Mammary epithelial cell (primary cell): ENCODE measurements at regions of chr3 and their contacts with region 1.

Region 1: DNA sequence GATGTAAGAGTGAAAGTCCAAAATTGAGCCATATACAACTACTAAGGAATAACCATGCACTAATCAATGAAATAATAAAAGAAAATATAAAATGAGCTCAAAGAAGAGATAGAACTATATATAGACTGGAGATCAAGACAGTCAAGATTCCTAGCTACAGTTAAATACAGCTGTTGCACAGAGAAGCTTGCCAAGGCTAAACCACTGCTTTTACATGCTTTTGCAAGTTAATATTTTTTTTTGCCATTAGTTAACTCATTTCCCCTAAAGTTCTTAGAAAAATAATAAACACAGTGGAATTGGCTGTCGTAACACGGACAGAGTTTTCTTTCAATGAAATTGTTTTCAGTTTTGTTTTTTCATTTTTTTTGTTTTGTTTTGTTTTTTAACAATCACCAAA is 123.0 kb downstream of the VGLL3 start:
- DNase-seq: no peak
- H3K4me3 ChIP-seq: no peak overlapping the region
- H3K27ac ChIP-seq: no peak overlapping the region
- H3K4me1 ChIP-seq: no peaks in the 10 kb centered on the region
- H3K27me3 ChIP-seq: peaks cover 2% of the 10 kb centered on the region
- CTCF ChIP-seq: no peak

Region 2: DNA sequence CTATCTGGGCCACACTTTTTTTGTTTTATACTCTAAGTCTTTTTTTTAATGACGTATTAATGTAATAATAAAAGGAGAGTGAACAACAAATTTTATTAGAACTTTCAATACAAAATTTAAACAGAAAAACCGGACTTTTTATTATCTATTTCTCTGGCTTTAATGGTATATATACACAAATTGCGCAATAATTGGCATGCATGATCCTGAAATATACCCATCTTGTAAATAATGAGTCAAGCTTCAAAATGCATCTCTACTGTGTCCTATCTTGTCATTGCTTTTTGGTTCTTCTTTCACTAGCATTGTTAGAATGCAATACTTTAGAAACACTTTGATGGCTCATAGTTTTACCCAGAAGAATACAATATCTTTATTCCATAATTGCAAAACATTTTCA is 945.6 kb before region 1 on chr3:
- CTCF ChIA-PET with region 1: no interaction called
- dilution Hi-C with region 1: no loop called
- in situ Hi-C with region 1: no loop called
- intact Hi-C with region 1: no loop called
- DNase-seq: no peak
- H3K4me3 ChIP-seq: no peak overlapping the region
- H3K27ac ChIP-seq: no peak overlapping the region
- H3K4me1 ChIP-seq: no peaks in the 10 kb centered on the region
- H3K27me3 ChIP-seq: no peaks in the 10 kb centered on the region
- CTCF ChIP-seq: no peak

Region 3: DNA sequence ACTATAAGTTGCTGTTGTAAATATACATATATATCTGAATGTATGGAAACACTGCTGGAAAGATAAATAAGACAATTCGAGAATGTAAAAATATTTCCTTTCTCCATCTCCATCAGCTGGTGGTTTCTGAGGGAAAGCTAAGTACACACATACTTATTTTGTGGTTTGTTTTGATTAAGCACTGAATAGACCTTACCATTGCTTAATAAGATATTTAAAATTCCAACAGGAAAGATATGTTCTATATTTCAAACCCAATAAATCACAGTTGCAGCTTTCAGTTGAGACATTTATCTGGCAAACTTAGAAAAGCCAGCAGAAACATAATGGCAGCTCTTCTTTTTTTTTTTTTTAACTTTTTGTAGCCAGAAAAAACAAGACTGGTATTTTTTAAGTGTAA is 37.4 kb before region 1 on chr3:
- CTCF ChIA-PET with region 1: no interaction called
- dilution Hi-C with region 1: no loop called
- in situ Hi-C with region 1: no loop called
- intact Hi-C with region 1: no loop called
- DNase-seq: peak; percentile 11
- H3K4me3 ChIP-seq: no peak overlapping the region
- H3K27ac ChIP-seq: no peak overlapping the region
- H3K4me1 ChIP-seq: no peaks in the 10 kb centered on the region
- H3K27me3 ChIP-seq: peaks cover 2% of the 10 kb centered on the region
- CTCF ChIP-seq: no peak

Region 4: DNA sequence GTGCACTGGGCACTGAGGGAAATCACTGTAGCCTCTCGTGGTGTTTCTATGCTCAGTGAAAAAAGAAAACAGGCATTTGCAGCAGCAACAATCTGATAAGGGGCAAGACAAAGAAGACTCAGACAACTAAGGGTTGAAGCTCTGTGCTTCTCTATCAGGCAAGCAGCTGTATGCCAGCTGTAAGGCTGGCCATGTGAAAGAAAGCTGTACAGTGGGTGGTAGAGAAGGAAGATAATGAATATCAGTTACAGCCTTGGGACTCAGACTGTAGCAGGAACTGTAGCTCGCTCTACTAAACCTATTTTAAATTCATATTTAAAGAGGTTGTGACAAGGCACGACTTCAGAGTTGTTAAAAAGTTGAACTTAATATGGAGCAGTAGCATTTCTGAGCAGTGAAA is 46.7 kb after region 1 on chr3:
- CTCF ChIA-PET with region 1: no interaction called
- dilution Hi-C with region 1: loop called (anchors 5 kb)
- in situ Hi-C with region 1: no loop called
- intact Hi-C with region 1: no loop called
- DNase-seq: no peak
- H3K4me3 ChIP-seq: no peak overlapping the region
- H3K27ac ChIP-seq: no peak overlapping the region
- H3K4me1 ChIP-seq: no peaks in the 10 kb centered on the region
- H3K27me3 ChIP-seq: no peaks in the 10 kb centered on the region
- CTCF ChIP-seq: no peak